Activated CD4-positive, alpha-beta T cell treated with anti-CD3 and anti-CD28 coated beads for 36 hours (primary cell): ENCODE measurements at regions of chrX and their contacts with region 1.

Region 1: GRCh38 chrX:130268500-130269170 is at the start of gene ZNF280C:
- DNase-seq: peak; percentile 96
- ATAC-seq: peak; percentile 98
- H3K4me3 Mint-ChIP-seq: peak within 1 kb of the TSS; percentile 85
- H3K27ac Mint-ChIP-seq: peak within 1 kb of the TSS; percentile 83
- H3K4me1 Mint-ChIP-seq: peaks cover 19% of the 10 kb centered on the region
- H3K27me3 Mint-ChIP-seq: no peaks in the 10 kb centered on the region
- total RNA-seq, gene ZNF280C: 5.9 to 8.6 TPM

Region 2: GRCh38 chrX:129772796-129773431 is 495.7 kb before region 1 on chrX:
- CTCF ChIA-PET with region 1: no interaction called
- POLR2A ChIA-PET with region 1: no interaction called
- intact Hi-C with region 1: loop called in 1 of 2 experiments (anchors 10 kb)
- DNase-seq: peak; percentile 71
- ATAC-seq: peak; percentile 25
- H3K4me3 Mint-ChIP-seq: peak overlapping the region; percentile 41
- H3K27ac Mint-ChIP-seq: peak overlapping the region; percentile 86
- H3K4me1 Mint-ChIP-seq: peaks cover 74% of the 10 kb centered on the region
- H3K27me3 Mint-ChIP-seq: no peaks in the 10 kb centered on the region

Region 3: DNA sequence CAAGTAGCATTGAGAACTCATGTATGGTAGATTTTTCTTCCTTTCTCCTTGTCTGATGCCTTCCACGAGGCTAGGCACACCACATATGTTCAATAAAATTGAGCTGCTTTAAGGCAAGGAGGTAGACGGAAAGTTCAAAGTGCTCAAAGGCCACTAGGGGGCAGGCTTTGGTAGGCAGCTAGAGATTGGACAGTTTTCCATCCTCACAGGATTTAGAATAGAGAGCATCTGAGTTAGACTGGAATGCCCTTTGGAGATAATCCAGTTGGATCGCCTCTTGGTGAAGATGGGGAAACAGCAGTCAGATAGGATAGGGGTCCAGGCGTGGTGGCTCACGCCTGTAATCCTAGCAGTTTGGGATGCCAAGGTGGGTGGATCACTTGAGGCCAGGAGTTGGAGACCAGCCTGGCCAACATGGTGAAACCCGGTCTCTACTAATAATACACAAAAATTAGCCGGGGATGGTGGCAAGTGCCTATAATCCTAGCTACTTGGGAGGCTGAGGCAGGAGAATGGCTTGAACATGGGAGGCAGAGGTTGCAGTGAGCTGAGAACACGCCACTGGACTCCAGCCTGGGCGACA is 188.7 kb before region 1 on chrX:
- CTCF ChIA-PET with region 1: no interaction called
- POLR2A ChIA-PET with region 1: no interaction called
- intact Hi-C with region 1: loop called (anchors 5 kb)
- DNase-seq: peak; percentile 72
- ATAC-seq: no peak
- H3K4me3 Mint-ChIP-seq: no peak overlapping the region
- H3K27ac Mint-ChIP-seq: peak overlapping the region; percentile 26
- H3K4me1 Mint-ChIP-seq: peaks cover 45% of the 10 kb centered on the region
- H3K27me3 Mint-ChIP-seq: no peaks in the 10 kb centered on the region

Region 4: GRCh38 chrX:130120746-130121504 is 147.7 kb before region 1 on chrX:
- CTCF ChIA-PET with region 1: no interaction called
- POLR2A ChIA-PET with region 1: no interaction called
- intact Hi-C with region 1: loop called in 1 of 2 experiments (anchors 5 kb)
- DNase-seq: peak; percentile 81
- ATAC-seq: peak; percentile 88
- H3K4me3 Mint-ChIP-seq: peak overlapping the region; percentile 57
- H3K27ac Mint-ChIP-seq: peak overlapping the region; percentile 60
- H3K4me1 Mint-ChIP-seq: peaks cover 19% of the 10 kb centered on the region
- H3K27me3 Mint-ChIP-seq: no peaks in the 10 kb centered on the region

Region 5: GRCh38 chrX:130211415-130212186 is 57.0 kb before region 1 on chrX:
- CTCF ChIA-PET with region 1: no interaction called
- POLR2A ChIA-PET with region 1: no interaction called
- intact Hi-C with region 1: loop called (anchors 5 kb)
- DNase-seq: no peak
- ATAC-seq: peak; percentile 63
- H3K4me3 Mint-ChIP-seq: peak overlapping the region; percentile 44
- H3K27ac Mint-ChIP-seq: peak overlapping the region; percentile 93
- H3K4me1 Mint-ChIP-seq: peaks cover 28% of the 10 kb centered on the region
- H3K27me3 Mint-ChIP-seq: no peaks in the 10 kb centered on the region

Region 6: DNA sequence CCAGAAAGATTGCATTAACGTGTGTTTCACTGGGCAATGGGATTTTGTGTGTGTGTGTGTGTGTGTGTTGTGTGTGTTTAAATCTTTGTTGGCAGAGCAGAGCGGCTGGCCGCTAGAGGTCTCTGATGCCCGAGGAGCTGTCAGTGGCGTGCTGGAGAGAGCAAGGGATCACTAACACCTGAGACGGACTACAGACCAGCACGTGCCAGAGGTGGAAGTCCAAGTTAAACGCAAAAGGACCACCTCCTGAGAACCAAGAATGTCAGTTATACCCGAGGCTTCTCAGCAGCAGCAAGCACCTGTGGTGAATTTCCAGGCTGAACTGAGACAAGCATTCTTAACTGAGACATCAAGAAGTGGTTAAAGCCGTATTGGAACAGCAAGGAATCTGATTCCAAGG is 62.1 kb after region 1 on chrX:
- CTCF ChIA-PET with region 1: no interaction called
- POLR2A ChIA-PET with region 1: no interaction called
- intact Hi-C with region 1: no loop called
- DNase-seq: peak; percentile 66
- ATAC-seq: peak; percentile 57
- H3K4me3 Mint-ChIP-seq: no peak overlapping the region
- H3K27ac Mint-ChIP-seq: no peak overlapping the region
- H3K4me1 Mint-ChIP-seq: no peaks in the 10 kb centered on the region
- H3K27me3 Mint-ChIP-seq: peaks cover 13% of the 10 kb centered on the region

Region 7: DNA sequence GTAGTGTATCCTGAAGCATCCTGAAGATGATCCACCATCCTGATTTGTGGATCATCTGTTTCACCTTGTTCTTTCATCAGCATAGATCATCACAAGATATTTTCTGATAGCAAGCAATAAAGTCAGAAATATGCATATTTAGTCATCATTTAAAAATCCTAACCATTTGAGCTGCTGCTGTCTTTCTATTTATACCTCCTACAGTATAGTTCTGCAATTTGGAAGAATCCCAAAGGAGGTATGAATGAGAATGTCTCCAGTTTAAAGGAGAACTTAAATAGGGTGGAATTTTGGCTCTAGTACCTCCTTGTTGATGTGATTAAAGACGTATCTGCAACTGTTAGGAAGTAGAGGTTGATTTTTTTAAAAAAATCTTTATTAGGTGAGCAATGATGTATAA is 78.7 kb after region 1 on chrX:
- CTCF ChIA-PET with region 1: no interaction called
- POLR2A ChIA-PET with region 1: no interaction called
- intact Hi-C with region 1: no loop called
- DNase-seq: no peak
- ATAC-seq: no peak
- H3K4me3 Mint-ChIP-seq: no peak overlapping the region
- H3K27ac Mint-ChIP-seq: no peak overlapping the region
- H3K4me1 Mint-ChIP-seq: no peaks in the 10 kb centered on the region
- H3K27me3 Mint-ChIP-seq: no peaks in the 10 kb centered on the region

Region 8: DNA sequence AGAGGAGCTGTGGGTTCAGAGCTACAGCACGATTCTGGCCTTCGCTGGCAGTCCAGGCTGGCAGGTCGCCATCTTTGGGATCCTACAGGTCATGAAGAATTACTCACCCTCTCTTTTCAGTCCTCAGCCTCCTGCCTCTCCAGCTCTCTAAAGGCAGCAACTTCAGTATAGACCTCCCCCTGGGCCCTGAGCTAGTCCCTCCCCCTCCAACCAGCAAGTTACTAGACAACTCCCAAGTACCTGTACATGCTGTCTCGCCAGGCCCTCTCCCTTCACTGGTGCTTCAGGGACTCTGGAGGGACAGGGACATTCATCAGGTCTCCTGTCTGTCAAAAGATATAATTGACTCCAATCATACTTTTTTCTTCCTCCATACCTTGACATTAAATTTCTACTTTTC is 116.9 kb after region 1 on chrX and contains the start of gene GPR119:
- CTCF ChIA-PET with region 1: no interaction called
- POLR2A ChIA-PET with region 1: no interaction called
- intact Hi-C with region 1: no loop called
- DNase-seq: no peak
- ATAC-seq: no peak
- H3K4me3 Mint-ChIP-seq: no peak within 1 kb of the TSS
- H3K27ac Mint-ChIP-seq: no peak within 1 kb of the TSS
- H3K4me1 Mint-ChIP-seq: no peaks in the 10 kb centered on the region
- H3K27me3 Mint-ChIP-seq: peaks cover 5% of the 10 kb centered on the region
- total RNA-seq, gene GPR119: not detected

Region 9: DNA sequence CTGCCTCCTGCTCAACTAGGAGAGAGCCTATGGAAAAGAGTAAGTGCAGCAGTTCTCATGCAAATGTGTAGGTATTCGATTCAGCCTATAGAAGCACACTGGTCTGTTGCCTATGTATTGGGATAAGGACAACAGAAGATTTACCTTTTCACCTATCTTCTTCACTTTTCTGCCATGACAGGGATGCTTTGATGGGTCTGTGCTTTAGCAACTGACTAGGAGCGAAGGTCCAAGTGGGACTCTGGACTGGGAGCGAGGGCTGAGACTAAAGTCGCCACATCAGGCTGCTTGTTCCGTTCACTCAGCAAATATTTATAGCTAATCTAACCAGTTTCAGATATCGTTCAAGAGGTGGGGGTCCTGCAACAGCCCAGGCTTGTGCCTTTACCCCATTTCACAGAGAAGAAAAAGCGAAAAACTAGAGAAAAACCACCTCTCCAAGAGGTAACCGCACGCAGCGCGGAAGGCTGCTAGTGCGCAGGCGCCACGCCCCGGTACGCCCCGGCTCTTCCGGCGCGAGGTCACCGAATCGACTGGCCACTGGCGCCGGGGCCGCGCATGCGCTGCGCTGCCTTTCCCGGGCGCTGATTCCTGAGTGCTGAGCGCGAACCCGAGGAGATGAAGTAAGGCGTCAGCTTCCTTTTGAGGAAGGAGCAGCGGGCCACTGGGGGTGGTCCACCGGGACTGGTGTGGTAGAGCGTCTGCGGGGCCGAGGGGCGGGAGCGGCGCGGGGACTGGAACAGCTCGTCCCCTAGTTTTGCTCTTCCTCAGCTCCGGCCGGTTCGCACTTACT is 133.0 kb after region 1 on chrX and contains the start of gene RBMX2:
- CTCF ChIA-PET with region 1: no interaction called
- POLR2A ChIA-PET with region 1: no interaction called
- intact Hi-C with region 1: loop called in 1 of 2 experiments (anchors 5 kb)
- DNase-seq: peak; percentile 79
- ATAC-seq: peak; percentile 93
- H3K4me3 Mint-ChIP-seq: peak within 1 kb of the TSS; percentile 93
- H3K27ac Mint-ChIP-seq: peak within 1 kb of the TSS; percentile 92
- H3K4me1 Mint-ChIP-seq: peaks cover 13% of the 10 kb centered on the region
- H3K27me3 Mint-ChIP-seq: peaks cover under 1% of the 10 kb centered on the region
- total RNA-seq, gene RBMX2: 25.4 to 26.8 TPM